Dendritic cell treated with granulocyte-macrophage colony-stimulating factor and Interleukin-4, amounts not matched to agents 40 ng/mL and 50 ng/mL, for 4 days (primary cell): ENCODE measurements at regions of chr4 and their contacts with region 1.

Region 1: GRCh38 chr4:168183717-168184608 is 91.6 kb downstream of the ANXA10 start:
- H3K4me3 Mint-ChIP-seq: no peak overlapping the region
- H3K27ac Mint-ChIP-seq: no peak overlapping the region
- H3K4me1 Mint-ChIP-seq: peaks cover 11% of the 10 kb centered on the region
- H3K27me3 Mint-ChIP-seq: no peaks in the 10 kb centered on the region

Region 2: GRCh38 chr4:168092176-168092712 is 91.7 kb before region 1 on chr4 and contains the start of gene ANXA10:
- intact Hi-C with region 1: no loop called
- H3K4me3 Mint-ChIP-seq: no peak within 1 kb of the TSS
- H3K27ac Mint-ChIP-seq: no peak within 1 kb of the TSS
- H3K4me1 Mint-ChIP-seq: no peaks in the 10 kb centered on the region
- H3K27me3 Mint-ChIP-seq: no peaks in the 10 kb centered on the region

Region 3: DNA sequence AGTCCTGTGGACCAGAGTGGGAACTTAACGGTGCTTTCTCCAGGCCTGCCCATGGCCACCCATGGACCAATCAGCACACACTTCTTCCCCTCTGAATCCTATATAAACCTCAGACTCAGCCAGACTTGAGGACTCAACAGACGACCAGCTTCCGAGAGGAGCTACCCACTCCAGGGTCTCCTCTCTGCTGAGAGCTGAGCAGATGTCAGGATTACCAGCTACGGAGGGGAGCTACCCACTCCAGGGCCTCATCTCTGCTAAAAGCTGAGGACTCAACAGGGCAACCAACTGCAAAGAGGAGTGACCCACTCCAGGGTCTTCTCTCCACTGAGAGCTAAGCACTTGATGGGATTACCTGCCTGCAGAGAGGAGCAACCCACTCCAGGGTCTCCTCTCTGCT is 214.6 kb after region 1 on chr4:
- intact Hi-C with region 1: loop called (anchors 10 kb)
- H3K4me3 Mint-ChIP-seq: no peak overlapping the region
- H3K27ac Mint-ChIP-seq: no peak overlapping the region
- H3K4me1 Mint-ChIP-seq: no peaks in the 10 kb centered on the region
- H3K27me3 Mint-ChIP-seq: no peaks in the 10 kb centered on the region

Region 4: GRCh38 chr4:169133932-169134331 is 950.0 kb after region 1 on chr4:
- intact Hi-C with region 1: no loop called
- H3K4me3 Mint-ChIP-seq: no peak overlapping the region
- H3K27ac Mint-ChIP-seq: no peak overlapping the region
- H3K4me1 Mint-ChIP-seq: no peaks in the 10 kb centered on the region
- H3K27me3 Mint-ChIP-seq: no peaks in the 10 kb centered on the region